HAP-1 (cell line): ENCODE measurements at regions of chr3 and their contacts with region 1.

Region 1: DNA sequence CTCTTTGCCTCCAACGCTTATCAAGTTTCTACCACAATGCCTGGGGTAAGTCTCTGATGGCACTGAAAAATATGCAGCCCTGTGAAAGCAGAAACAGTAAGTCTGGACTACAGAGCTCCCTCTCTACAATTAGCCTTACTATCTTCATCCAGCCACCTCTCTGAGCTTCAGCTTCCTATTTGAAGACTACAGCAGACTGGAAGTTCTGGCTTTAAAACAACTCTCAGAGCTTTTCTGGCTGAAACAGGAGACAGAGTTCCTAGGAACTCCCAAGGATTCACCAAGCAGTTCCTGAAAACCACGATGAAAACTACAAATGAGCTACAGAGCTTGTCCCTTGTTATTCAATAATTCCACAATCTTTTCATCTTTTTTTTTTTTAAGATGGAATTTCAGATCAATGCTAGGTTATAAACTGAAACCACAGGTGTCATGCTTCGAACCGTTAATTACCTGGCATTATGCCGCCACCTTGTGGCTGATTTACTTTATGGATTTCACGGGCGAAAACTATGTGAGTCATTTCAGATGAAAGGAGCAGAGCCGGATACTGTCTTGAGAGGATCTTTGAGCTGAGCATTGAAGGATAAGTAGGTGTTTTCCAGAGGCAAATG is 3.9 kb downstream of the CRYGS start:
- DNase-seq: peak; percentile 59 to 79
- H3K4me3 ChIP-seq: no peak overlapping the region
- H3K4me1 ChIP-seq: peaks cover 6% of the 10 kb centered on the region
- H3K27me3 ChIP-seq: no peaks in the 10 kb centered on the region

Region 2: GRCh38 chr3:185115371-185115770 is 1425.0 kb before region 1 on chr3:
- in situ Hi-C with region 1: no loop called
- DNase-seq: no peak
- H3K4me3 ChIP-seq: no peak overlapping the region
- H3K4me1 ChIP-seq: peaks cover 3% of the 10 kb centered on the region
- H3K27me3 ChIP-seq: no peaks in the 10 kb centered on the region

Region 3: DNA sequence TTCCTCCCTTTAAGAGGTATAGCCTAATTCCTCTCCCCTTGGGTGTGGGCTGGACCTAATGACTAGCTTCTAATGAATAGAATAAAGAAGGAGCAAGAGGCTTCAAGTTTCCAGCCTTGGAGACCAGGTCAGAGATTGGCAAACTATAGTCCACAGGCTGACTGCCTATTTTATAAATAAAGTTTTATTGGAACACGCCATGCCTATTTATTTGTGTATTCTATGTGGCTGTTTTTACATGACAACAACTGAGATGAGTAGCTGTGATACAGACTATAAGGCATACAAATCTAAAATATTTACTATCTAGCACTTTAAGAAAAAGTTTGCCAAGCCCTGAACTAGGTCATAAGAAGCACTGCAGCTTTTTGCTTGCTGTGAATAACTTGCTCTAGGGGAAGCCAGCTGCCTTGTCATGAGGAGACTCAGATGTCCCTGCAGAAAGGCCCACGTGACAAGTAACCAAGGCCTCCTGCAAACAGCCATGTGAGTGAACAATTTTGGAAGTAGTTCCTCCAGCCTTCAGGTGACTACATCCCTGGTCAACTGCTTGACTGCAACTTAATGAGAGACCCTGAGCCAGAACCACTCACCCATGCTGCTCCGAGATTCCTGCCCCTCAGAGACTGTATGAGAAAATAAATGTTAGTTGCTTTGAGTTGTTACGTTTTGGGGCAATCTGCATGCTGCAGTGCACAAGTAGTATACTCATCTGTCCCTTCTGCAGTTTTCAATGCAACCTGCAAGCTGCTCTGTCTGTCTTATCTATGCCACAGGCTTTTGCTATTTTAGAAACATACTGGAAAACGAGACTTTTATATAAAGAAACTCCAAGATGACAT is 1198.5 kb before region 1 on chr3:
- in situ Hi-C with region 1: no loop called
- DNase-seq: no peak
- H3K4me3 ChIP-seq: no peak overlapping the region
- H3K4me1 ChIP-seq: no peaks in the 10 kb centered on the region; the same call in 1 of the 2 replicates
- H3K27me3 ChIP-seq: no peaks in the 10 kb centered on the region

Region 4: GRCh38 chr3:186259612-186260383 is 280.5 kb before region 1 on chr3:
- in situ Hi-C with region 1: loop called (anchors 5 kb)
- DNase-seq: peak; percentile 66 to 83
- H3K4me3 ChIP-seq: no peak overlapping the region
- H3K4me1 ChIP-seq: peaks cover 3% of the 10 kb centered on the region; the same call in 1 of the 2 replicates
- H3K27me3 ChIP-seq: no peaks in the 10 kb centered on the region; the same call in 1 of the 2 replicates